Activated naive CD4-positive, alpha-beta T cell treated with anti-CD3 and anti-CD28 coated beads for 36 hours (primary cell): ENCODE measurements at regions of chr16 and their contacts with region 1.

Region 1: DNA sequence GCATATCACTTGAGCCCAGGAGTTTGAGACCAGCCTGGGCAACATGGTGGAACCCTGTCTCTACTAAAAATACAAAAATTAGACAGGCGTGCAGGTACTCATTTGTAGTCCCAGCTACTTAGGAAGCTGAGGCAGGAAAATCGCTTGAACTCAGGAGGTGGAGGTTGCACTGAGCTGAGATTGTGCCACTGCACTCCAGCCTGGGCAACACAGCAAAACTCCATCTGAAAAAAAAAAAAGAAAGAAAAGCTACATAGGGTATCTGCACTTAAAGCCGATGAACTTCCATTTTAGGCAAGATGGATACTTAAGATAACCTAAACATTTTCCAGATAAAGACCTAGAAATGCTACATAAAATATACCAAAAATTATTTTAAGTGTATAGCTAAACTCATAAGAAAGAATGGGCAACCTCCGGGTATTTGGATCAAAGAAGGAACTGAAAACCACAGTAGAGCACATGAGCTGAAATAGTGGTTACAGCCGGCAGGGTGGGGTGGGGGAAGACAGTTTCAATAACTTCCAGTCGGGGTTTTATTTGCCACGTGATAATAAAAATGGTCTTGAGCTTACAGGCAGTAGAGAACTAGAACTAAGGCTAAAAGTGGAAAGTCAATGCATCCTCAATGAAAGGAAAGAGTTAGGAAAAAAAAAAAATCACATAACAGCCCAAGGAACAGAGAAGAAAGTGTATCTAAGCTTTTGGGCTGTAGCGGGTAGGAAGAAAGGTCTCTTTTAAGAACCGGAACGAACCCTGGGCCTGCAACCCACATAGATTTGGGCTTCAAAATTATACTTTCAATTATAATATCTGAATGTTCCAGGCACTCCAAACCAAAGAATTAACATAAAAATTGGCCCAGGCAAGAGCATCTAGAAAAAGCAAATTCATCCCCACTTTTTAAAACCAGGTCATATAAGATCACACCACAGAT is 53.1 kb downstream of the CFDP1 start:
- DNase-seq: peak; percentile 53
- H3K4me3 Mint-ChIP-seq: no peak overlapping the region
- H3K27ac Mint-ChIP-seq: no peak overlapping the region
- H3K4me1 Mint-ChIP-seq: peaks cover 51% of the 10 kb centered on the region
- H3K27me3 Mint-ChIP-seq: peaks cover 2% of the 10 kb centered on the region

Region 2: DNA sequence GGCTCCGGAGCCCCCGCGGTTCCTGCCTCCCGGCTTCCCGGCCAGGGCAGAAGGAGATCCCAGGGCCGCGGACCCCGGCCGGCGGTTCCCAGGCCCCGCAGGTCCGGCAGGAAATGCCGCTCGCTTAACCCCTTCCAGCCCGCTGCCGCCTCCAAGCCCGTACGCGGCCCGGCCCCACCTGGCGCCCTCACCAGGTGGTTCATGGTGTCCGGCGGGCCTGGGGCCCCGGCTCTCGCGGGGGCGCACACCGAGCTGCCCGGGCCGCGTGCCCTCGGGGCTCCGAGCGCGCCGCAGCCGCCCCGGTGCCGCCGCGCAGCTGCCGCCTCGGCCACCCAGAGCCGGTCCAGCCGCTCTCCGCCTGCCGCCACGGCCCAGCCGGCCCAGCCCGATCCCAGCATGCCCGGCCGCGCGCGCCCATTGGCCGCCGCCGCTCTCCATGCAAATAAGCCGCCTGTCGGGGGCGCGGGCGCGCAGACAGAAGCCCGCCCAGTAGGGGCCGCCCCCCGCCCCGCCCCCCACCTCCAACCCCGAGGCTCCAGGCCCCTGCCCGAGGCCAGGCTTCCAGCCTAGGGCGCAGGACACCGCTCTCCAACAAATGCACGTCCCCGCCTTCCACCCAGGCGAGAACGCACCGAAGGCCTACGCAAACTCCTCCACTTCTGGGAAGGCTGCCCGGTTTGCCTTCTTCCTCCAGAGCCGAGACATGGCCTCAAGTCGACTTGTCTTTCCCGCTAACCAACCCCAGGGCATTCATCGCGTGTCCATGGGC is 128.7 kb before region 1 on chr16 and contains the start of gene BCAR1:
- CTCF ChIA-PET with region 1: interaction called, 4 read pairs
- intact Hi-C with region 1: loop called (anchors 1 kb)
- DNase-seq: peak; percentile 22
- H3K4me3 Mint-ChIP-seq: peak within 1 kb of the TSS; percentile 64
- H3K27ac Mint-ChIP-seq: no peak within 1 kb of the TSS
- H3K4me1 Mint-ChIP-seq: peaks cover 3% of the 10 kb centered on the region
- H3K27me3 Mint-ChIP-seq: peaks cover 31% of the 10 kb centered on the region
- total RNA-seq, gene BCAR1: 0.67 to 0.81 TPM

Region 3: DNA sequence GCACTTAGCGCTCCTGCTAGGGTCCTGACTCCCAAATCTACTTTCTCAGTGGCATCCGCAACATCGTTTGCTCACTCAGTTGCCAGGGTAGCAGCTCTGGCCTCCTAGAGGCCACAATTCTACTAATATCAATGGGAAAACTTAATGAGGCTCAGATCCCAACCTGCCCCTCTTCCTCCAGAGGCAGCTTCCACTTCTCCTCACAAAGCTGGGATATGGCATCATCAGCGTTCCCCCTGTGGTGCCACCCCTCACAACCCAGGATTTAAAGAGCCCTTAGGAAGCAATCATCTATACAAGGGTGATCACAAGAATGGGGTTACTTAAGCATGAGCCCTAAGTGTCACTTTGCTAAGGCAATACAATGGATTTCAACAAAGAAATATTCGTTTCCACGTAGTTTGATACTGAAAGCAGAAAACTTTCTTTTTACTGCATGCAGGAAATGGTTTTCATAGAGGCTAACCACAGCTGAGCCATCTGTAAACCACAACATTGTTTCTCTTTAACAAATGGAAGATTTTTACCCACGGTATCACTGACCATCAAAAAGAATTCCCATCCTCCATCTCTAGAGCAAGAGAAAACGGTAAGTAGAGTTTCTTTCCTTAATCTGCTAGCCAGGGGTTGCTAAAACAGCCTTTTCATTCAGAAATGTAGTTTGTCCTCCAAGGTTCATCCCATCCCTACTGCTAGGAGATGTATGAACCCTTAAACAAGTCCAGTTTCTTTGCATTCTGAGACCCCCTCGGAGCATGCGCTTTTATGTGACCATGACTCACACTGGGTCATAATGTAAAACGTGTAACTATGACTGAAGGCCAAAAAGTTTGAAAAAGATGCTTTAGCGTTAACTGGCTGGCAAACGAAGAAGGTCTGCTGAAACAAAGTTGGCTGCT is 60.4 kb before region 1 on chr16:
- CTCF ChIA-PET with region 1: interaction called, 3 read pairs
- intact Hi-C with region 1: loop called (anchors 1 kb)
- DNase-seq: peak; percentile 40
- H3K4me3 Mint-ChIP-seq: no peak overlapping the region
- H3K27ac Mint-ChIP-seq: no peak overlapping the region
- H3K4me1 Mint-ChIP-seq: peaks cover 35% of the 10 kb centered on the region
- H3K27me3 Mint-ChIP-seq: no peaks in the 10 kb centered on the region

Region 4: DNA sequence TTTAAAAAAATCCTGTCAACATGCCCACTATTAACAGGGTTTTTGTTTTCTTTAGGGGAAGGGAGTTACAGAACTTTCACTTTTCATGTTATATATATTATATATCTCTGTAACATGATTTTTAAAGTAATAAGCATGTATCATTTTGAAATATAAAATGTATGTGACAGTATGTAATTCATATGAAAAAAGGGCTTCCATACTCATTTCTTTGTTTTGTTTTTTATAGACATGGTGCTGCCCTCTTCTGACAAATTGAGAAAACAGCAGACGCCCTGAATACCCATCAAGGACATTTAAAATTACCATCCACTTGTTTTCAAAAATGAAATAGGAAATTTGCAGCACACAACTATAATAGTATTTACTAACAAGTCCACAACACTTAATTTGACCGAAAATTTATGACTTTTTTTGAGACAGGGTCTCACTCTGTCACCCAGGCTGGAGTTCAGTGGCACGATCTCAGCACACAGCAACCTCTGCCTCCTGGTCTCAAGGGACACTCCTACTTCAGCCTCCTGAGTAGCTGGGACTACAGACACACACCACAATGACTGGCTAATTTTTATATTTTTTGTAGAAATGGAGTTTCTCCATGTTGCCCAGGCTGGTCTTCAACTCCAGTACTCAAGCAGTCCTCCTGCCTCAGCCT is 22.8 kb after region 1 on chr16:
- CTCF ChIA-PET with region 1: interaction called, 6 read pairs
- intact Hi-C with region 1: loop called (anchors 1 kb)
- DNase-seq: no peak
- H3K4me3 Mint-ChIP-seq: no peak overlapping the region
- H3K27ac Mint-ChIP-seq: no peak overlapping the region
- H3K4me1 Mint-ChIP-seq: peaks cover 27% of the 10 kb centered on the region
- H3K27me3 Mint-ChIP-seq: no peaks in the 10 kb centered on the region

Region 5: DNA sequence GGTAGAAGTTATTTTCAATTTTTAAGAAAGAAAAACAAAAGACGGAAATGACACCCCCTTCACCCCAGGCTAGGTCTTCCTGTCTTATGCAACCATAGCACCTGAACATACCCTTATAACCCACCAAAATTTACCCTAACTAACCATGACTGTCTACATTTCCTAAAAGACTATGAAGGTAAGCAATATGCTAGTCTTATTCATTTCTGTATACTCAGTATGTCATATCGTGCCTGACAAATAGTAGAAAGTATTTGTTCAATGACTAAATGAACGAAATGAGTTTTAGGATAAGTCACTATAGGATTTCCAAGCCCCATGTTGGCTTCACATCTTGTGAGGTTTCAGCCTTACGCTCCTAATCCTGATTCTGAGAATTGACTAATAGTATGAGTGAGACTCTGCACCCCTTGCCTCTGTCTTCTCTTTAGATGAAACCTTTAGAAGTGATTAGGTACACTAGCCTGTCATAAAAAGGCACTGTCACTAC is 236.4 kb after region 1 on chr16:
- CTCF ChIA-PET with region 1: no interaction called
- intact Hi-C with region 1: loop called (anchors 1 kb)
- DNase-seq: peak; percentile 24
- H3K4me3 Mint-ChIP-seq: no peak overlapping the region
- H3K27ac Mint-ChIP-seq: peak overlapping the region; percentile 6
- H3K4me1 Mint-ChIP-seq: peaks cover 33% of the 10 kb centered on the region
- H3K27me3 Mint-ChIP-seq: no peaks in the 10 kb centered on the region